Activated CD4-positive, alpha-beta memory T cell treated with anti-CD3 and anti-CD28 coated beads for 36 hours (primary cell): ENCODE measurements at regions of chr6 and their contacts with region 1.

Region 1: GRCh38 chr6:42547407-42548329 is 16.2 kb upstream of the UBR2 start:
- DNase-seq: peak; percentile 92
- H3K4me3 Mint-ChIP-seq: peak overlapping the region; percentile 62
- H3K27ac Mint-ChIP-seq: no peak overlapping the region
- H3K4me1 Mint-ChIP-seq: peaks cover 23% of the 10 kb centered on the region
- H3K27me3 Mint-ChIP-seq: peaks cover 4% of the 10 kb centered on the region

Region 2: DNA sequence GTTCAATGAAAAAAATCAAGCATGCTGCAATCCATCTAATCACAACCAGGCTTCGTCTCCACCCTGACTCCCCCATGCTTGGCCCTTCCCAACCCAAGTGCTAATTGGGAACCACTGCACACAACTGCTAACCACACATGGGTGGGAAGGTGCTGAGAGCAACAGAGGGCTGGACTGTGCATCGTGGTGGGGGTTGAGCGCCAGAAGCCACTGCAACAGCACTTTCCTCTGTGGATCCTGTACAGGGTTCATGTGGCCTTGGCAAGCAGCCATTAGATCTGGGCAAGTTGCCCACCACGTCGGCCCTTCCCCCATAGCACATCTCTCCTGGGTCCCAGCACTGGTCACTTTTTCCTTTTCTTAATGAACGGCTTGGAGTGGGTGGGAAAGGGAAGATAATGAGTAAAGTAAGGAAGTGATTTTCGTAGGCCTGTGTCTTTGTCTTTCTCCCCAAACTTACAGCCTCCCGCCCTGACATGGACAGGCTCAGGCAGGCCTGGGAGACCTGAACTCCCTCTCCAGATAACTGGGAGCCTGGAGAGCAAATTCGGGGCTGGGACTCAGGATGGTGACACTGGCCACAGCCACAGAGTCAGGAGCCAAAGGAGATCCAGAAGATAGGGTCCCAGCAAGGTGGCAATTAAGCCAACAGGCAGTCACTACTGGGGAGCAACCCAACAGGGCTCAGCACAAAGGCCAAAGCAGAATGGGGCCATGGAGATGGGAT is 295.6 kb before region 1 on chr6:
- CTCF ChIA-PET with region 1: interaction called, 23 read pairs
- POLR2A ChIA-PET with region 1: no interaction called
- intact Hi-C with region 1: no loop called
- DNase-seq: no peak
- H3K4me3 Mint-ChIP-seq: no peak overlapping the region
- H3K27ac Mint-ChIP-seq: peak overlapping the region; percentile 6
- H3K4me1 Mint-ChIP-seq: peaks cover 14% of the 10 kb centered on the region
- H3K27me3 Mint-ChIP-seq: no peaks in the 10 kb centered on the region

Region 3: GRCh38 chr6:42315991-42316378 is 231.7 kb before region 1 on chr6:
- CTCF ChIA-PET with region 1: interaction called, 46 read pairs
- POLR2A ChIA-PET with region 1: no interaction called
- intact Hi-C with region 1: no loop called
- DNase-seq: peak; percentile 71
- H3K4me3 Mint-ChIP-seq: no peak overlapping the region
- H3K27ac Mint-ChIP-seq: peak overlapping the region; percentile 80
- H3K4me1 Mint-ChIP-seq: peaks cover 65% of the 10 kb centered on the region
- H3K27me3 Mint-ChIP-seq: no peaks in the 10 kb centered on the region

Region 4: GRCh38 chr6:42374018-42374659 is 173.5 kb before region 1 on chr6:
- CTCF ChIA-PET with region 1: interaction called, 11 read pairs
- POLR2A ChIA-PET with region 1: no interaction called
- intact Hi-C with region 1: no loop called
- DNase-seq: peak; percentile 53
- H3K4me3 Mint-ChIP-seq: no peak overlapping the region
- H3K27ac Mint-ChIP-seq: peak overlapping the region; percentile 72
- H3K4me1 Mint-ChIP-seq: peaks cover 69% of the 10 kb centered on the region
- H3K27me3 Mint-ChIP-seq: no peaks in the 10 kb centered on the region

Region 5: DNA sequence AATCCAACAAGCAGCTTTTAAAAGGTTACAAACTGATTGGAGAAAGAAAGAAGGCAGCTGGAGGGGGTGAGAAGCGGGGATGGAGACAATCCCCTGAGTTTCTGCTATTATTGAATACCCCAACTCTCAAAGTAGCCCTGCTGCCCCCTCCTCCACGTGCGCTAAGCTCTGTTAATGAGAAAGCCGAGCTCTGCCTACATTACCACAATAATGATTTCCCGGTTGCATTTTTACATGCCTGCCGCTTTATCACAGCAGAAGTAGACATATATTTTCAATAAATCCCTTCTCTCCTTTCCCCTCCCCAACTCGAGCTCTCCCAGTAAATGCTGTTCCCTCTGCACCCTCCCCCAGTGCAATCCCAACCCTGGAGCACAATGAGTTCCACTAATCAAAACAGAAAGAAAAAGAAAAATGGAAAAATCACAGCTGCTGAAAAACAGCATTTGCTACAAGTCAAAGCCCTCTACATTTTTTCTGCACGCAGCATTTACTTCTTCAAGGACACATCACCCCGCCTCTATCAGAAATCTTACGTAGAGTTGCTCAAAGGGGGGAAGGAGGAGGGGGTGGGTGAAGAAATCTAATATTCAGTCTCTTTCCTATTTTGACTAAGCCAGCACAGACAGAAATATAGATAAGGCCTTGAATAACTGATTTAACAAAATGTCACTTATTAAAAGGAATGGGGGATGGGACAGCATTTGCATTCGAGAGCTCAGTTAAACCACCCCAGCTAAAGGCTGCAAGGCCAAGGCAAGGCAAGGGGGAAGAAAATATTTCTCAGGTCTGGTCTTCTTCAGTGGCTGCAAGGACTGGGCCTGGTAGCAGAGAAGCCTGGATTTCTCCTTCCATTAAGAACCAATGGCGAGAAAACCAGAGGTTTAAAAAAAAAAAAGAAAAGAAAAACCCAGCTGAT is 106.6 kb before region 1 on chr6:
- CTCF ChIA-PET with region 1: interaction called, 24 read pairs
- POLR2A ChIA-PET with region 1: no interaction called
- intact Hi-C with region 1: no loop called
- DNase-seq: no peak
- H3K4me3 Mint-ChIP-seq: peak overlapping the region; percentile 60
- H3K27ac Mint-ChIP-seq: peak overlapping the region; percentile 75
- H3K4me1 Mint-ChIP-seq: peaks cover 65% of the 10 kb centered on the region
- H3K27me3 Mint-ChIP-seq: no peaks in the 10 kb centered on the region

Region 6: GRCh38 chr6:42532038-42532669 is 15.5 kb before region 1 on chr6:
- CTCF ChIA-PET with region 1: interaction called, 42 read pairs
- POLR2A ChIA-PET with region 1: interaction called, 3 read pairs
- intact Hi-C with region 1: no loop called
- DNase-seq: no peak
- H3K4me3 Mint-ChIP-seq: no peak overlapping the region
- H3K27ac Mint-ChIP-seq: no peak overlapping the region
- H3K4me1 Mint-ChIP-seq: peaks cover 4% of the 10 kb centered on the region
- H3K27me3 Mint-ChIP-seq: no peaks in the 10 kb centered on the region

Region 7: GRCh38 chr6:42652024-42652746 is 104.5 kb after region 1 on chr6:
- CTCF ChIA-PET with region 1: no interaction called
- POLR2A ChIA-PET with region 1: no interaction called
- intact Hi-C with region 1: no loop called
- DNase-seq: no peak
- H3K4me3 Mint-ChIP-seq: no peak overlapping the region
- H3K27ac Mint-ChIP-seq: no peak overlapping the region
- H3K4me1 Mint-ChIP-seq: no peaks in the 10 kb centered on the region
- H3K27me3 Mint-ChIP-seq: no peaks in the 10 kb centered on the region

Region 8: DNA sequence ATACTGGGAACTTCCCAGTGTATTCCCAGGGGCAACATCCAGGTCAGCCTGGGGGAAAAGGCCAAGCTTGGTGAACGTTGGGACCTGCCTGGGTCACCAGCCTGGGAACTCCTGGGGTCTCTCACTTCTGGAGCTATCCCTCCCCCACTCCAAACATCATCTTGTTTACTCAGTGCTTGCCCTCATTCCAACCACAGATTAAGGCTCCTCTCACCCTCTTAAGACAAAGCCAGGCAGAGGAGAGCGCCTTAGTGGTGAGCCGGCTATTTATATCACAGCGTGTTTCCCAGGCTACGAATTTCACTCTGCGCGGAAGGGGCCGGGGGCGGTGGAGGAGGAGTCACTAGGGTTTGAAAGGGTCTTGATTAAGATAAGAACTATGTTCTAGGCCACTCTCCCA is 162.6 kb after region 1 on chr6:
- CTCF ChIA-PET with region 1: no interaction called
- POLR2A ChIA-PET with region 1: no interaction called
- intact Hi-C with region 1: no loop called
- DNase-seq: no peak
- H3K4me3 Mint-ChIP-seq: no peak overlapping the region
- H3K27ac Mint-ChIP-seq: no peak overlapping the region
- H3K4me1 Mint-ChIP-seq: no peaks in the 10 kb centered on the region
- H3K27me3 Mint-ChIP-seq: no peaks in the 10 kb centered on the region